ENCODE measurements at regions of chr6 and their contacts with region 1.

Region 1: GRCh38 chr6:16964553-16965501 is 137.0 kb upstream of the STMND1 start:
- DNase-seq: peak; percentile 75
- H3K4me3 ChIP-seq: no peak overlapping the region
- H3K27ac ChIP-seq: no peak overlapping the region
- H3K4me1 ChIP-seq: no peaks in the 10 kb centered on the region
- H3K27me3 ChIP-seq: no peaks in the 10 kb centered on the region
- CTCF ChIP-seq: peak; percentile 79 to 91 (median 80)
- POLR2A ChIP-seq: no peak

Region 2: DNA sequence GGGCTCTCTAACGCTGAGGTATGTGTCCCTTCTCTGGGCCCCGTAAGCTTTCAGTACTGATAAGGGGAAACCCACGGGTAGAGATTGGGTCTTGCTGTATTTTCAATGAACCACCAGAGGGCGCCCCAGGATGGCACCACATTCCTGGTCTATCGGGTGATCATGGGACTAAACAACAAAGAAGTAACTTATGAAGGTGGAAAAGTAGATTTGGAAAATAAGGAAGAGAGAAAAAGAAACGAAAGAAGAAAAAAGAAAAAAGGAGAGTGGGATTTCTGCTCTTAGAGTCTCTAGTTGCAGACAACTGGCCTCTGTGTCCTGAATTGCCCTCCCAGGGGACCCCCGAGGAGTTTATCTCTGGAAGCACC is 632.7 kb before region 1 on chr6:
- intact Hi-C with region 1: loop called (anchors 10 kb)
- DNase-seq: peak; percentile 83
- H3K4me3 ChIP-seq: no peak overlapping the region
- H3K27ac ChIP-seq: peak overlapping the region in 1 of 2 donors; percentile 41
- H3K4me1 ChIP-seq: no peaks in the 10 kb centered on the region
- H3K27me3 ChIP-seq: no peaks in the 10 kb centered on the region
- CTCF ChIP-seq: peak; percentile 84 to 96 (median 92)
- POLR2A ChIP-seq: no peak

Region 3: GRCh38 chr6:16514249-16514648 is 450.6 kb before region 1 on chr6:
- intact Hi-C with region 1: loop called (anchors 10 kb)
- DNase-seq: no peak
- H3K4me3 ChIP-seq: no peak overlapping the region
- H3K27ac ChIP-seq: no peak overlapping the region
- H3K4me1 ChIP-seq: peaks cover 8% of the 10 kb centered on the region
- H3K27me3 ChIP-seq: no peaks in the 10 kb centered on the region
- CTCF ChIP-seq: peak in 3 of 4 experiments; percentile 44 to 52 (median 51)
- POLR2A ChIP-seq: no peak

Region 4: DNA sequence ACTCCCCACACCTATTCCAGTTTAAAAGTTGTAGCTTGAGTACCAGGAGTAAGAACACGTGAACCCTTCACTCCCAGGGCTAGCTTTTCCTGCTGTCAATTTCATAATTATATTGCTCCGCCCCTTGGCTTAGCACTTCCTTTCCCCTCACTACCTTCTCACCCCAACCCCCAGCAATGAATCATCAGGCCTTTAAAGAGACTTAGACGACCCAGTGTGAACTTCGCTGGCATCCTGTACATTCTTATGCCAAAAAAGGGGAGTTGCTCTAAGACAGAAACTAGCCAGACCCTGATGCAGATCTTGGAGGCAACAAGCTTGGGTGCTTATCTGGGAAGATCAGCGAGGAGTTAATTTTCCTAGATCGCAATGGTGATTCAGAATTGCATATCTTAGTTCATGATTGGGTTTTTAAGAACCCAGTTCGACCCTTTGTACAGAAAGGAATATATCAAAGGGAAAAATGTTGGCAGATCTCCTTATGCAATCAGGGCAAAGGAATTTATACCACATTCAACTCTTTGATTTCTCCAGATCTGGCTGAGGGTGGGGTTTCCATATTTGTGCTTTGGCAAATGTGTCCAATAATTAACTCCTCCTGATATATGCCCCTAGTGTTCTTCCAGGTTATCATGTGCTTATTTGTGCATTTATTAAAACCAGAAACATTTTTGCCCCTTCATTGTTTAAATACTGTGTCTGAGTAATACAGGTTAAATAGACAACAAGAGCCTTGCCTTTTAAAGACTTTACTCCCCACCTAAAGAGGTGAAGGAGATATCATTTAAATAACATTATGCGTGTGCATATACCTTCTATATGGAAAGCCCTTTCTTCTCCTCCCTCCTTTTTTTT is 195.5 kb before region 1 on chr6:
- intact Hi-C with region 1: loop called (anchors 5 kb)
- DNase-seq: peak; percentile 39
- H3K4me3 ChIP-seq: no peak overlapping the region
- H3K27ac ChIP-seq: peak overlapping the region in 1 of 2 donors; percentile 18
- H3K4me1 ChIP-seq: peaks cover 7% of the 10 kb centered on the region
- H3K27me3 ChIP-seq: no peaks in the 10 kb centered on the region
- CTCF ChIP-seq: no peak
- POLR2A ChIP-seq: no peak

Region 5: DNA sequence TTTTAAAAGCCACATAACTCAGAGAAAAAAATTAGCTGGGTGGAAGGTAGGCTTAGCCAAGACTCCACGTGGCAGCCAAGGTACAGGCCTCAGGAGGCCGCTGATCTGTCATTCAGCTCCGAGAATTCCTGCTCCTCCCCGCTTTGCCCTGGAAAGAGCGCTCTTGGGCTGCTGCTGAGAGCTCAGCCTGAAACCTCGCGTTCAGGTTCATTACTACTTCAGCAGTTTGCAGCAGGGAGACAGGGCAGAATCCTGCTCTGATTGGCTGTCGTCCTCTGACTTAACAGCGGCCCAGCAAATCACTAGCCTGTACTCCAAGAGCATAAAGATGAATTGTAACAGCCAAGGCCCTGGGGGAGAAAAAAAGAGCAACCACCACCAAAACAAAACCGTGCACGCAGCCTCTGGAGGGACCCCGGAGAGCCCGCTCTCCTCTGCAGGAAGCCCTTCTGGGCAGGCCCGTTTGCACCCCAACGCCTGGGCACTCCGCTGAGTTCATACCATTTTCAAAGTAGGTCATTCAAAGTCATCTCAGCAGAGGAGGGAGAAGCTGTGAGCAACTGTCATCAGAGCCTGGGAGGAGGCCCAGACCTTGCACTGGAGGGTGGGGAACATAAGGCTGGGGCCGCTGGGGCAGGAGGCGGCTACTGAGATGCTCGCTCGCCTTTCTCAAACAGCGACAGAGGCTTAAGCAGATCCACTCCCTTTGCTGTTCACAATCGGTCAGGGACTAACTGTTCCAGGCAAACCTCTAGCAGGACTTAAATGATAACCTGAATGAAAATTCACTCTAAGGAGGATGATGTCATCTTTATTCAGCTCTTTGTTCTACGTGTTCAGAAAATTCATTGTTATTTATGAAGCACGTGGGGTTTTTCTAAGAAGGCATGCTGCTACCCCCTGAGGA is 161.3 kb before region 1 on chr6:
- intact Hi-C with region 1: loop called (anchors 10 kb)
- DNase-seq: no peak
- H3K4me3 ChIP-seq: no peak overlapping the region
- H3K27ac ChIP-seq: peak overlapping the region in 1 of 2 donors; percentile 11
- H3K4me1 ChIP-seq: no peaks in the 10 kb centered on the region
- H3K27me3 ChIP-seq: no peaks in the 10 kb centered on the region
- CTCF ChIP-seq: no peak
- POLR2A ChIP-seq: no peak

Region 6: DNA sequence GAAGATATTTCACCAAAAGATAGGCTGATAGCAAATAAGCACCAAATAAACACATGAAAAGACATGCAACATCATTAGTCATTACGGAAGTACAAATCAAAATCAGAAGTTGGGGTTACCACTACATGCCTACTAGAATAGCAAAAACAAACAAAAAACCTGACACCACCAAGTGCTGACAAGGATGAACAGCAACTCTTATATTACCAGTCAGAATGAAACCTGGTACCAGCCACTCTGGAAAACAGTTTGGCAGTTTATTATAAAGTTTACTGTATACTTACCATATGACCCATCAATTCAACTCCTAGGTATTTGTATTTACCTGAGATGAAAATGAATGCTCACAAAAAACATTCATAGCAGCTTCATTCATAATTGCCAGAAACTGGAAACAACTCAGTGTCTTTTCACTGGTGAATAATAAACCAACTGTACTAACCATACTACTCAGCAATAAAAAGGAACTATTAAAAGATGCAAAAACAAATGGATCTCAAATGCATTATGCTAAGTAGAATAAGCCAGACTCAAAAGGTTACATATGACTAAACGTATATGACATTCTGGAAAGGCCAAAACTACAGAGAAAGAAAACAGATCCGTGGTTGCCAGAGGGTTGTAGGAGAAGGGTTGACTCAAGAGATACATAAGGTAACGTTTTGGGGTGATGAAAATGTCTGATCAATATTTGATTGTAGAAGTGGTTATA is 708.9 kb after region 1 on chr6:
- intact Hi-C with region 1: no loop called
- DNase-seq: no peak
- H3K4me3 ChIP-seq: no peak overlapping the region
- H3K27ac ChIP-seq: no peak overlapping the region
- H3K4me1 ChIP-seq: no peaks in the 10 kb centered on the region
- H3K27me3 ChIP-seq: no peaks in the 10 kb centered on the region
- CTCF ChIP-seq: no peak
- POLR2A ChIP-seq: no peak

Measured in prostate gland (tissue), 2 donors.